Head of caudate nucleus (tissue), 42 donors: ENCODE measurements at regions of chr12 and their contacts with region 1.

Region 1: GRCh38 chr12:62793256-62794217 is 141.4 kb downstream of the PPM1H start:
- DNase-seq: peak; percentile 73 to 97 (median 91)

Region 2: DNA sequence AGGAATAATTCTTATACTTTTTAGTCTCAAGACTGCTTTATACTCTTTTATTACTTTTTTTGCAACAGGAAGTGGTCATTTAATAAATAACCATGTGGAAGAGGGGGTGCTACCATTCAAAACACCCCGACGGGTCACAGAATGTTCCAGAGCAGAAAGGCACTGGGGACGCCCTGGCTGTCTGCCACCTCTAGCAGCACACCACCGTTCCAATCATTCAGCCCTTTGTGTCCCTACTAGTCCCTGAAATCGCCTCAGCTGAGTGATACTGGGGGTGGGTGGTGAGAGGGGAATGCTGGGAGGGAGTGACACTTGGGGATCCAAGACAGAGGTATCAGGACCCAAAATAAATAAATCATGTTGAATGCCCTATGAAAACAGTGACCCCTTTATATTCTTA is 274.5 kb before region 1 on chr12:
- intact Hi-C with region 1: no loop called
- DNase-seq: peak in 40 of 42 donors; percentile 8 to 72 (median 34)

Region 3: GRCh38 chr12:62581288-62582064 is 212.1 kb before region 1 on chr12:
- intact Hi-C with region 1: loop called (anchors 5 kb)
- DNase-seq: peak in 1 of 42 donors; percentile 7